Activated CD8-positive, alpha-beta T cell treated with anti-CD3 and anti-CD28 coated beads, Interleukin-2, amount 10 ng/mL, durations not matched to agents 7 days and 5 days (primary cell): ENCODE measurements at regions of chr2 and their contacts with region 1.

Region 1: DNA sequence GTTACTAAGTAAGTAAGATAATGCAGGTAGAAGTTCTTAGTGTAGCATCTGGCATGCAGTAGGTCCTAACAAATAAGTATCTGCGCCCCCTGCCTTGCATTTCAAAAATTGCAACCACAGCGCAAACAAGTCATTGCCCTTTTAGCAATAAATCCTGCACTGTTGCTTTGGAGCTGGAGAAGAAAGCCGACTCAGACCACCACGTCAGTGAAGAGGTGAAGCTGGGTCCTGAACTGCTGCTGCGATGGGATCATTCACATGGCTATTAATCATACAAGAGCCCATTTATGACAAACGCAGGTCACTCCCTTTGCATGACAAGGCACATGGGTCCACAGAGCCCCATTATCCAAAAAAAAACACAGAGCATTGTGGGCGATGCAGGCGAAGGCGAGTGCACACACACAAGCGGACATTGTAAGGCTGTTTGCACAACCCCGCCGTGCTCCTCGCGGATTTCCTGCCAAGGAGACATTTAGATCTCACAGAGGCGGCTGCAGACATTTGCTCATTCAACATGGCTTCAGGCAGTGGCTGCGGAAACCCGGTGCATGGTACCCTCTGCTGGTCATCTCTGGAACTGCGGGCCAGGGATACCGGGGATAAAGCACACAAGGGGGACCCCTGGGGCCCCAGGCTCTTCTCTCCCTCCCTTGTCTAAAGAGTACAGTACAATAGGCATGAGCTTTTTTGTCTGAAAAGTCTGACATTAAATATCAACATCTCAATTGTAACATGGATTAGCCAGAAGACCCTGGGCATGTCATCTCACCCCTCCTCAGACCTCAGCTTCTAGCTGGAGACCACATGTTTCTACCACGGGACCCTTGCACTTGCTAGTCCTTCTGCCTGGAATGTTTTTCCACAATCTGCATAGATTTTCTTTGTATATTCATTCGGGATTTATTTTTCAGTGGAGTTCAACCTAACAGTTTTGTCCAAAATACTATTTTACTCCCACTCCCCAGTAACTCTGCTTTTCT is 56.7 kb downstream of the CYRIA start:
- DNase-seq: peak; percentile 91
- ATAC-seq: peak; percentile 96
- H3K4me3 Mint-ChIP-seq: peak overlapping the region; percentile 78
- H3K27ac Mint-ChIP-seq: peak overlapping the region; percentile 83
- H3K4me1 Mint-ChIP-seq: peaks cover 8% of the 10 kb centered on the region
- H3K27me3 Mint-ChIP-seq: peaks cover 3% of the 10 kb centered on the region

Region 2: DNA sequence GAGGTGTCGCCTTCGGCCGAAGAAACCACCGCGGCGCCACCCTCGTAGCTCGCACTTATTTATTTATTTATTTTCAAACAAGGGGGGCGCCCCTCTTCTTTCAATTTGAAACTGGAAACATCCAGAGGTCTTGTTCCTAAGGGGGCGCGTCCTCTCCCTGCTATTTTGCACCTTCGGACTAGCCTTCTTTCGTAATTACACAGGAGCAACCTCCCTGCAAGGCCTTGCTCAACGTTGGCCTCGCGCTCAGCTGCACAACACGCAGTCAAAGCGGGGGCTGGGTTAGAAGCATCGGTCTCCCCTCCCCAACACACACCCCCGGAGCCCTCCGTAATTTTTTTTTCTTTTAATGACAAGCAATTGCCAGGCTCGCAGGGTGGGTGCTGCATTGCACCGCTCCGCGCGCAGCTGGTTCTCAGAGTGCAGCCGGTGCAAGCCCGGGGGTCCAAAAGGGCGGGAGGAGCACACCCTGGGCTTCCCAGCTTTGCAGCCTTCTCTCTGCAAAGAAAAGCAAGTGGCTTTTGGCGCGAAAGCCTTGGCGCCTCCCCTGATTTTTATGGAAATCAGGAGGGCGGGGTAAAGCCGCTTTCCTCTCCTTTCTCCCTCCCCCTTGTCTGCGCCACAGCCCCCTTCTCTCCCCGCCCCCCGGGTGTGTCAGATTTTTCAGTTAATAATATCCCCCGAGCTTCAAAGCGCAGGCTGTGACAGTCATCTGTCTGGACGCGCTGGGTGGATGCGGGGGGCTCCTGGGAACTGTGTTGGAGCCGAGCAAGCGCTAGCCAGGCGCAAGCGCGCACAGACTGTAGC is 668.9 kb before region 1 on chr2 and contains the start of gene MYCN:
- CTCF ChIA-PET with region 1: interaction called, 16 read pairs
- POLR2A ChIA-PET with region 1: no interaction called
- DNase-seq: peak; percentile 59
- ATAC-seq: peak; percentile 47
- H3K4me3 Mint-ChIP-seq: peak within 1 kb of the TSS; percentile 48
- H3K27ac Mint-ChIP-seq: no peak within 1 kb of the TSS
- H3K4me1 Mint-ChIP-seq: peaks cover 29% of the 10 kb centered on the region
- H3K27me3 Mint-ChIP-seq: peaks cover 47% of the 10 kb centered on the region
- total RNA-seq, gene MYCN: not detected

Region 3: DNA sequence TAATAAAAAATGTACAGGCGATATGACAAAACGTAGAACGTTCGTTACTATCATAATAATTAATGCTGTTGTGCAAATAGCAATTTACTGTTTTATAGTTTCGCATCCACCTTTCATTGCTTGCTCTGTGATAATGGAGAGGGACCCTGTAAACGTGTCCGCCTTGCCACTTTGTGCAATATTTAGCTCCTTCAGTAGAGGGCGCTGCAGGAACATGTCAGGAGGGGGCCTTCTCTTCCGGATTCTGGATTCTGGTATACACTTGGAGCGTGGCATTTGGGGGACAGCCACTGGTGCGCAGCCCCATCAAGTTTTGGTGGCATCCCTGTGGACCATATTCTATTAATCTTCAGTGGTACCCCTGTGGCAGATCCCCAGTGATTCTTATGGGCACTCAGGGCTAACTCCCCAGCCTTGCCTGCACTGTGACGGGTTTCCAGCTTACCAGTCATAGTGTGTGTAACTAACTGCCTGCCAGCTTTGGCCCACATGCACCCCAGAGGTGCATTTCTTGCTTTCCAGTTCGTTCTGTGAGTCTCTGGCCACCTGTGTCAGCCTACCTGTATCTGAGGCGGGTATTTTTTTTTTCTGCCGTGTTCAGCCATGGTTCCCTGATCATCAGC is 83.6 kb before region 1 on chr2:
- CTCF ChIA-PET with region 1: interaction called, 10 read pairs
- POLR2A ChIA-PET with region 1: no interaction called
- DNase-seq: peak; percentile 30
- ATAC-seq: no peak
- H3K4me3 Mint-ChIP-seq: no peak overlapping the region
- H3K27ac Mint-ChIP-seq: no peak overlapping the region
- H3K4me1 Mint-ChIP-seq: no peaks in the 10 kb centered on the region
- H3K27me3 Mint-ChIP-seq: no peaks in the 10 kb centered on the region

Region 4: GRCh38 chr2:16588565-16588964 is 20.4 kb before region 1 on chr2:
- CTCF ChIA-PET with region 1: no interaction called
- POLR2A ChIA-PET with region 1: no interaction called
- DNase-seq: no peak
- ATAC-seq: no peak
- H3K4me3 Mint-ChIP-seq: no peak overlapping the region
- H3K27ac Mint-ChIP-seq: no peak overlapping the region
- H3K4me1 Mint-ChIP-seq: no peaks in the 10 kb centered on the region
- H3K27me3 Mint-ChIP-seq: peaks cover 2% of the 10 kb centered on the region

Region 5: GRCh38 chr2:16623031-16623430 is 14.1 kb after region 1 on chr2:
- CTCF ChIA-PET with region 1: interaction called, 22 read pairs
- POLR2A ChIA-PET with region 1: no interaction called
- DNase-seq: no peak
- ATAC-seq: no peak
- H3K4me3 Mint-ChIP-seq: no peak overlapping the region
- H3K27ac Mint-ChIP-seq: no peak overlapping the region
- H3K4me1 Mint-ChIP-seq: peaks cover 21% of the 10 kb centered on the region
- H3K27me3 Mint-ChIP-seq: peaks cover 3% of the 10 kb centered on the region

Region 6: DNA sequence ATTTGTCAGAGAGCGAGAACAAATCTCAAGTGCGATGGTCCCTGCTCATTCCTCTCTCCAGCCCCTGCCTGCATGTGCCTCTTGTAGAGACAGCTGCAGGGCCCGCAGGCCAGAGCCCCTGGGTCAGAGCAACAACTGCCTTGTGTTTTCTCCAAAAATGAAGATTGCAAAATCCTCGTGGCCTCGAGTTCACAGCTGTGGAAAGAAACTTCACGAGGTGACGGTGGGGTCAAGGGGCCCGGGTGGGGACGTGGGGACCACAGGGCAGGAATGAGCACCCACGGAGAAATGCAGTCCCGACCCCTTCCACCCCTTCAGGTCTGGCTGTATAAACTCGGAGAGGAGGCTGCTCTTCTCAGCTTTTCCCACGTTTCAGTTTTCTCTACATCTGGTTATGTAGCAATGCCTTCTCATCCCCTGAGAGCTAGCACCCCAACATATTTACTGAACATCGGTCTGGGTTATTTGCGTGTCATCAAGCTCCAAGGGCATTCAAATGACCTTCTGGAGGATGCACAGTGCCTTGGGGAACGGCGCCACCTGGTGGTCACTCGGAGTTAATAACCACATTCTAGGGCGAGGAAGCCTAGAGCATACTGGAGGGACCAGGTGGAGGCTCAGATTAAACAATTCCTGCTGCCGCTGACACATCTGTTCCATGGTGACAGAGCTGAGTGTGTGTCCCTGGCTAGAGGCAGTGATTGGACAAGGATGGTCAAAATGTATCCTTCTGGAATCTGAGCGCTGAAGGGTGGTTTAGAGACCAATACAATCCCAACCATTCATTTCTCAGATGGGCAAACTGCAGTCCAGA is 148.1 kb after region 1 on chr2:
- CTCF ChIA-PET with region 1: interaction called, 12 read pairs
- POLR2A ChIA-PET with region 1: no interaction called
- DNase-seq: peak; percentile 73
- ATAC-seq: peak; percentile 84
- H3K4me3 Mint-ChIP-seq: no peak overlapping the region
- H3K27ac Mint-ChIP-seq: no peak overlapping the region
- H3K4me1 Mint-ChIP-seq: no peaks in the 10 kb centered on the region
- H3K27me3 Mint-ChIP-seq: no peaks in the 10 kb centered on the region